ENCODE measurements at regions of chr2 and their contacts with region 1.

Region 1: GRCh38 chr2:195559431-195559914 is 97.6 kb upstream of the SLC39A10 start:
- DNase-seq: peak; percentile 95
- H3K4me3 Mint-ChIP-seq: peak overlapping the region; percentile 59
- H3K27ac Mint-ChIP-seq: peak overlapping the region; percentile 98
- H3K4me1 Mint-ChIP-seq: peaks cover 71% of the 10 kb centered on the region
- H3K27me3 Mint-ChIP-seq: no peaks in the 10 kb centered on the region

Region 2: DNA sequence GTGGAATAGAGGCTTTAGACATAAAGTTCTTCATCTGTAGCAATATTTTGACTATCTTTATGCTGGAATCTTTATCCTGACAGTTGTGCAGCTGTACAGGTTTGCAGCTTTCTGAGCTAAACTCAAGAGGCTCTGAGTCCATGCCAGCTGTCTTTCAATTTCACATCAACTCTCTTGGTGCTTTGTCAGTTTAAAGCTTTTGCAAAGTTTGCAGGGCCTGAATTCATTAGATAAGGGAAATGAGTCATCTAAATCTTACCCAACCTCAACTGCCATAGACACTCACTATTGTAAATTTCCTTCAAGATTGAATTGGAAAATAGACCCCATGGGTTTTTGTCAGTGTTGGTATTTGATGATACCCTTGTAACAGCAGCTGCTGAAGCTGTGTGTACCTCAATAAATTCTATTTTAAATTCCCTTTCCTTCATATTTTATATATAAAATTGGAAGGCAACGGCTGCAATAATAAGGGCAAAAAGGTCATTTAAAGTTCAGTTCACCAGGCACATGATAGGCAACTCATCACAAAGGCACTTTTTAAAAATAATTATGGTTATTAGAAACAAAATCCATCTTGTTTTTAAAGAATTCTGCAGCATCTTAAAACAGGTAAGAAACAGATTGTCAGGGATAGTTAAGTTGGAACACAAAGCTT is 72.4 kb before region 1 on chr2:
- CTCF ChIA-PET with region 1: no interaction called
- intact Hi-C with region 1: loop called (anchors 1 kb)
- DNase-seq: peak; percentile 34
- H3K4me3 Mint-ChIP-seq: no peak overlapping the region
- H3K27ac Mint-ChIP-seq: peak overlapping the region; percentile 64
- H3K4me1 Mint-ChIP-seq: peaks cover 16% of the 10 kb centered on the region
- H3K27me3 Mint-ChIP-seq: no peaks in the 10 kb centered on the region

Region 3: DNA sequence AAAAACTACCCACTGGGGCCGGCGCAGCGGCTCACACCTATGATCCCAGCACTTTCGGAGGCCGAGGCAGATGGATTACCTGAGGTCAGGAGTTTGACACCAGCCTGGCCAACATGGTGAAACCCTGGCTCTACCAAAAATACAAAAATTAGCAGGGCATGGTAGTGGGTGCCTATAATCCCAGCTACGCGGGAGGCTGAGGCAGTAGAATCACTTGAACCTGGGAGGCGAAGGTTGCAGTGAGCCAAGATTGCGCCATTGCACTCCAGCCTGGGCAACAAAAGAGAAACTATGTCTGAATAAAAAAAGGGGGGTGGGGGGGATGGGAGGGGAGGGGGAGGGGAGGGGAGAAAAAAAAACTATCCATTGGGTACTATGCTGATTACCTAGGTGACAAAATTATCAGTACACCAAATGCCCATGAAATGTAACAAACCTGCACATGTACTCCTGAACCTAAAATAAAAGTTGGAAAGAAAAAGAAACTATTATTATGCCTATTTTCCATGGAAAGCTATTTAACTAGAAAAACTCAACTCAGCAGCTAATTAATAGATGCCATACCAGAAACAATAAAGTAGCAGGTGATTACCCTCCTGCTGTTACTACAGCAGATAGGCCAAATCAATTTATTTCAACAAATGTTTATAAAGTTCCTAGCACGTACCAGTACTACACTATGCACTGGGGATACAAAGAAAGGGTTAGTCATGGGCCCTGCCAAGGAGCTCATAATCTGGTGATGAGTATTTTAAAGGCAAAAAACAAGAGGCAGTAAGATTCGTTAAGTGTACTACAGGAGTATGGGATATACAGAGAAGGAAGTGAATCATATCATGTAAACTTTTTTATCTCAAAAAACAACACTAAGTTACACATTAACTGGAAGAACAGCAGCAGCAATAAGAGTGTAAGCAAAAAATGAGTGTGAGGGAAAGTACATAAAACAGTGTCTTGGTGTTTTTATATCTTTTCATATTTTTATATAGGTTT is 15.3 kb before region 1 on chr2:
- CTCF ChIA-PET with region 1: interaction called, 8 read pairs
- intact Hi-C with region 1: loop called (anchors 1 kb)
- DNase-seq: peak; percentile 72
- H3K4me3 Mint-ChIP-seq: peak overlapping the region; percentile 40
- H3K27ac Mint-ChIP-seq: peak overlapping the region; percentile 91
- H3K4me1 Mint-ChIP-seq: peaks cover 67% of the 10 kb centered on the region
- H3K27me3 Mint-ChIP-seq: no peaks in the 10 kb centered on the region

Region 4: DNA sequence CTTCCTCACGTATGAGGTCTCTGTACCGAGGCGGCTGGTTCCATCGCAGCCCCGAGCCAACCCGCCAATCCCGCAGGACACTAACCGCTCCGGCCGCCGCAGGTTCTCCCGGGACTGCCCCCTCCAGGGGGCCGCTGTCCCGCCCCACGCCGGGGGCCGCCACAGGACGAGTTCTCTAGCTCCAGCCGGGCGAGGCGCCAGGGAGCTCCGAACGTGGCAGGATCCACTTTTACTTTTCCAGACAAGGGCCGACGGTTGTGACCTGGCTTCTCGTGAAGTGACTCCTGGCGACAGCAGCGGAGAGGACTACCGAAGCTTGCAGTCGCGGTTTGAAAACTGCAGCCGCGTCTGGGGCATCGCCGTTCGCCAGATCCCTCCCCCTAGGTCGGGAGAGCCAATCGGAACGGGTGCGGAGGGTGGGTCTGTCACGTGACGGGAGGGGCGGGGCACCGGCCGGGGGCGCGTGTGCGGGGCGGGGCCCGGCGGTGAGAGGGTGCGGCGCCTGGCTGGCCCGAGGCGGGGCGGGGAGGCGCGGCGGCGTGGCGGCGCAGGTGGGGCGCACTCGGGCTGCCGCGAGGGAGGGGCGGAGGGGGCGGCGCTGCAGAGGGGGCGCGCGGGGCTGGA is 611.9 kb after region 1 on chr2 and contains the start of gene STK17B:
- CTCF ChIA-PET with region 1: no interaction called
- intact Hi-C with region 1: loop called (anchors 5 kb)
- DNase-seq: peak; percentile 98
- H3K4me3 Mint-ChIP-seq: peak within 1 kb of the TSS; percentile 93
- H3K27ac Mint-ChIP-seq: peak within 1 kb of the TSS; percentile 92
- H3K4me1 Mint-ChIP-seq: peaks cover 34% of the 10 kb centered on the region
- H3K27me3 Mint-ChIP-seq: no peaks in the 10 kb centered on the region
- total RNA-seq, gene STK17B: 141 to 143 TPM

Region 5: DNA sequence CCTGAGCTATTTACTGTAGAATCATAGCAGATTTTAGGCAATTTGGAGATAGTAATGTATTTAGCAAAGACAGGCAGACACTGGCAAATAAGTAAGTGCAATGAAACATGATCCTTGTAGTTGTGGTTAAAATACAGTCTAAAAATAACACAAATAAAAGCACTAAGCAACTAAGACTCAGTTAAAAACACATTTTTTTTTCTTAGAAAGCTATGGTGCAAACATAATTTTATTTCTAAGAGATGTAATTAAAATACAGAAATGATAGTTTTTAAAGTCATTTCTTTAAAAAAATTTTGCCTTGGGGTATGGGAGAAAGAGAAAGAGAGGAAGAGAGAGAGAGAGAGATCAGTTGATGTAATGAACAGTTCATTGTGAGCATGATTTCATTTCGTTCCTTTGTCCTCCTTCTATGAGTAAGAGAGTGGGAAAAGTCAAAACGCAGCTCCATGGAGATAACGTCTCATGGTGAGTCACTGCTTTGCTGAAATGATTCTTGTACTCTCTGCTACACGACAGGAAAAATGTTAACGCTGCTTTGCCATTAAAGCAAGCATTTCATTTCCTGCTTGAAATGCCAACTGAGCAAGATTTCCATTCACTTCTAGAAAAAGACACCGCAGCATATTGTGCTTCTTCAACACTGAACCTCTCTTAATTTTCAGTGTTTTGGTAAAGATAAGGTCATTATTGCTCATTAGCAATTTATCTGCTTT is 1428.3 kb after region 1 on chr2:
- CTCF ChIA-PET with region 1: no interaction called
- intact Hi-C with region 1: loop called (anchors 5 kb)
- DNase-seq: peak; percentile 76
- H3K4me3 Mint-ChIP-seq: peak overlapping the region; percentile 17
- H3K27ac Mint-ChIP-seq: peak overlapping the region; percentile 98
- H3K4me1 Mint-ChIP-seq: peaks cover 78% of the 10 kb centered on the region
- H3K27me3 Mint-ChIP-seq: no peaks in the 10 kb centered on the region